Sigmoid colon (tissue), 7 donors: ENCODE measurements at regions of chr16 and their contacts with region 1.

Region 1: DNA sequence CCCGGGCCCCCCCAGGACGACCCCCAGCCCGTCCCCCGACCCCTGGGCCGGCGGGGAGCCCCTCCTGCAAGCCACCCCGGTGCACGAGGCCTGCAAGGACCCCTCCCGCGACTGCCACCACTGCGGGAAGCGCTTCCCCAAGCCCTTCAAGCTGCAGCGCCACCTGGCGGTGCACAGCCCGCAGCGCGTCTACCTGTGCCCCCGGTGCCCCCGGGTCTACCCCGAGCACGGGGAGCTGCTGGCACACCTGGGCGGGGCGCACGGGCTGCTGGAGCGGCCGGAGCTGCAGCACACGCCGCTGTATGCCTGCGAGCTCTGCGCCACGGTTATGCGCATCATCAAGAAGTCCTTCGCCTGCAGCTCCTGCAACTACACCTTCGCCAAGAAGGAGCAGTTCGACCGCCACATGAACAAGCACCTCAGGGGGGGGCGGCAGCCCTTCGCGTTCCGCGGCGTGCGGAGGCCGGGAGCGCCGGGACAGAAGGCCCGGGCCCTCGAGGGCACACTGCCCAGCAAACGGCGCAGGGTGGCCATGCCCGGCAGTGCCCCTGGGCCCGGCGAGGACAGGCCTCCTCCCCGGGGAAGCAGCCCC is 15.6 kb upstream of the ZFPM1 start:
- DNase-seq: no peak
- H3K4me3 ChIP-seq: no peak overlapping the region
- H3K27ac ChIP-seq: no peak overlapping the region
- H3K4me1 ChIP-seq: peaks cover 0 to 8% (median 6%) of the 10 kb centered on the region in 4 donors
- H3K27me3 ChIP-seq: peaks cover 5 to 31% (median 28%) of the 10 kb centered on the region in 3 donors
- CTCF ChIP-seq: peak; percentile 63 to 91 (median 76)
- EP300 ChIP-seq: no peak
- POLR2A ChIP-seq: no peak

Region 2: DNA sequence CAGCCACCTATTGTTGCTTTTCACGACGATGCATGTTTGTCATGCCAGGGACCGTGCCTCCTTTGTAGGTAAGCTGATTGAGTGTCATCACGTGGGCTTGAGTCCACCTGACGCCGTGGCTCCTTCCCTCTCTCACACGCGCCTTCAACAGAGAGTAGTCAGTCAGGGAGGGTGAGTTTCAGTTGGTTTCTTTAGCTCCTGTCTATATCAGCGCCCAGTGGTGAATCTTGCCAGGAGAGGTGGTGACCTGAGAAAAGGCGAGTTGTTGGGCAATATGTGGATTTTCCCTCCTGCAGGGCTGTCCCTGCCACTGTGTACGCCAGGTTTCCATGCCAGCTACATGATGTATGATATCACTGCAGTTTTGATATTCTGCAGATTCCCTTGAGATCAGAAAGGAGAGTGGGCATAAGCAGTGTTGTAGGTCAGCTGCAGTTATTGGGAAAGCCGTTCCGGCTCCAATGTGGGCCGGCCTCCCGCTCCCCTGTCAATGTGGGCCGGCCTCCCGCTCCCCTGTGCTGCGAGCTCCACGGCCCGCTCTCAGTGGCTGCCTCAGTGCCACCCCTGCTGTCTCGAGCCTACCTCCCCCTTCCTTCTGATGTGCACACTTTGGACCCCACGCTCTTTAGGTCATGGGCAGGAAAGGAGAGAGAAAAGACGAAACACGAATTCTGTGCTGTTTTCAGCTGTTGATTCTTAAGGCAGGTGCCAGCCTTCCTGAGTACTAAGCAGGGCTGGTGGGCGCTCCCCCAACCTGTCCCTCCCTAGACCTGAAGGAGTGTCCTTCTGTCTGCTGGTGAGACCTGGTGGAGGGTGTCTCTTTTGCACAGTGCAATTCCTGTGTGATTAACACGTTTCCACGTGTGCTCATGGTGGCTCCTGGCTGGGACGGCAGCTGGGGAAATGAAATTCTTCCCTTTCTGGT is 454.7 kb before region 1 on chr16:
- intact Hi-C with region 1: loop called (anchors 10 kb)
- DNase-seq: peak; percentile 32
- H3K4me3 ChIP-seq: no peak overlapping the region
- H3K27ac ChIP-seq: no peak overlapping the region
- H3K4me1 ChIP-seq: no peaks in the 10 kb centered on the region
- H3K27me3 ChIP-seq: no peaks in the 10 kb centered on the region
- CTCF ChIP-seq: no peak
- EP300 ChIP-seq: no peak
- POLR2A ChIP-seq: no peak

Region 3: GRCh38 chr16:88194397-88195268 is 242.8 kb before region 1 on chr16:
- intact Hi-C with region 1: loop called (anchors 2 kb)
- DNase-seq: peak; percentile 84
- H3K4me3 ChIP-seq: no peak overlapping the region
- H3K27ac ChIP-seq: no peak overlapping the region
- H3K4me1 ChIP-seq: no peaks in the 10 kb centered on the region
- H3K27me3 ChIP-seq: no peaks in the 10 kb centered on the region
- CTCF ChIP-seq: no peak
- EP300 ChIP-seq: no peak
- POLR2A ChIP-seq: no peak